Dorsolateral prefrontal cortex (tissue), 120 donors: ENCODE measurements at regions of chr6 and their contacts with region 1.

Region 1: DNA sequence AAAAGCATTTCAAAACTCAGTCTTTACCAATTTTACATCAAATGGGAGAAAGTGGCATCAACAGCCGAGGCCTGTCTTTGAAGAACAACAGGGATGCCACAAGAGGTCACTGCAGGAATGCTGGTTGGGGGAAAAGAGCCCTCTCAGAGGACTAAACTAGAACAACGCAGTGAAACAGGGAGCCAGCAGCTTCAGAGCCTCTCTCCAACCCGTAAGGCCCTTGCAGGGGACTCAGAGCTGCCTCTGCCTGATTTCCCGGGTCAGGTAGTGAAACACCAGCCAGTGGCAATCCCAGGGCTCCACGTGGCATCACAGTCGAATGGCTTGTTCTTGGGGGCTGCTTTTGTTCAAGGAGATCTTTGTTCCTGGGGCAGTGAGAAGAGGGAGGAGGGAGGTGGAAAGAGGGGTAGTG is 55.0 kb upstream of the KCNK16 start:
- DNase-seq: peak; percentile 48 to 89 (median 78)
- H3K4me3 ChIP-seq: peak overlapping the region in 1 of 59 donors; percentile 19
- H3K27ac ChIP-seq: peak overlapping the region in 47 of 59 donors; percentile 4 to 88 (median 65)
- H3K27me3 ChIP-seq: no peaks in the 10 kb centered on the region
- CTCF ChIP-seq: peak; percentile 9 to 93 (median 81)

Region 2: DNA sequence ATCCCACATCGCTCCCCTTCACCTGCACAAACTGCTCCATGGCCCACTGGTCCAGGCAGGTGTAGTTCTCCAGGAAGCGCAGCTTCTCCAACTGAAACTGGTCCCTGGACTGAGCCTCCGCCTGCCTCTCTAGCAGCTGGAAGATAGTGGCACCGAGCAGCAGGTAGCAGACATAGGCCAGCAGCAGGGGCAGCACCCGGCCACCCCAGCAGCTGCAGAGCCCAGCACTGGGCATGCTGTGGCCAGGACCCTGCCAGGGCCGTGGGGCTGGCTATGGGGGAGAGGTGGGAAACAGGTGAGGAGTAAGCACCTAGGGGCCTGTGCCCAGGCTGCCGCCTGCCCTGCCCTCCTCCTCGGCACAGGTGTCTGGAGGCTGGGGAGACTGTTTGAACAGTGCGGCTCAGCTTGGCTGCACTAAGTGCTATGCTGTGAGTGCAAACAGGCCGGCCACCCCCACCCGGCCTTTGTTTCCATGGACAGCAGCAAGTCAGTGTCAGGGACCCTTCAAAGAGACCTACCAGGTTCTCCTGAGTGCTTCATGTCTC is 55.2 kb before region 1 on chr6 and contains the start of gene KCNK16:
- intact Hi-C with region 1: no loop called
- DNase-seq: no peak
- H3K4me3 ChIP-seq: no peak within 1 kb of the TSS
- H3K27ac ChIP-seq: no peak within 1 kb of the TSS
- H3K27me3 ChIP-seq: no peaks in the 10 kb centered on the region
- CTCF ChIP-seq: no peak
- total RNA-seq, gene KCNK16: 0.42 to 0.76 (median 0.50) TPM in 7 of 120 experiments, not detected in the others

Region 3: GRCh38 chr6:39430871-39431523 is 53.5 kb after region 1 on chr6:
- intact Hi-C with region 1: loop called in 1 of 2 experiments (anchors 5 kb)
- DNase-seq: peak; percentile 71 to 84 (median 82)
- H3K4me3 ChIP-seq: peak overlapping the region in 31 of 59 donors; percentile 0 to 54 (median 17)
- H3K27ac ChIP-seq: peak overlapping the region in 57 of 59 donors; percentile 15 to 92 (median 72)
- H3K27me3 ChIP-seq: no peaks in the 10 kb centered on the region
- CTCF ChIP-seq: peak in 36 of 56 donors; percentile 10 to 59 (median 31)

Region 4: GRCh38 chr6:39669207-39669972 is 291.8 kb after region 1 on chr6:
- intact Hi-C with region 1: loop called (anchors 5 kb)
- DNase-seq: no peak
- H3K4me3 ChIP-seq: no peak overlapping the region
- H3K27ac ChIP-seq: peak overlapping the region in 10 of 59 donors; percentile 5 to 94 (median 86)
- H3K27me3 ChIP-seq: no peaks in the 10 kb centered on the region
- CTCF ChIP-seq: no peak

Region 5: DNA sequence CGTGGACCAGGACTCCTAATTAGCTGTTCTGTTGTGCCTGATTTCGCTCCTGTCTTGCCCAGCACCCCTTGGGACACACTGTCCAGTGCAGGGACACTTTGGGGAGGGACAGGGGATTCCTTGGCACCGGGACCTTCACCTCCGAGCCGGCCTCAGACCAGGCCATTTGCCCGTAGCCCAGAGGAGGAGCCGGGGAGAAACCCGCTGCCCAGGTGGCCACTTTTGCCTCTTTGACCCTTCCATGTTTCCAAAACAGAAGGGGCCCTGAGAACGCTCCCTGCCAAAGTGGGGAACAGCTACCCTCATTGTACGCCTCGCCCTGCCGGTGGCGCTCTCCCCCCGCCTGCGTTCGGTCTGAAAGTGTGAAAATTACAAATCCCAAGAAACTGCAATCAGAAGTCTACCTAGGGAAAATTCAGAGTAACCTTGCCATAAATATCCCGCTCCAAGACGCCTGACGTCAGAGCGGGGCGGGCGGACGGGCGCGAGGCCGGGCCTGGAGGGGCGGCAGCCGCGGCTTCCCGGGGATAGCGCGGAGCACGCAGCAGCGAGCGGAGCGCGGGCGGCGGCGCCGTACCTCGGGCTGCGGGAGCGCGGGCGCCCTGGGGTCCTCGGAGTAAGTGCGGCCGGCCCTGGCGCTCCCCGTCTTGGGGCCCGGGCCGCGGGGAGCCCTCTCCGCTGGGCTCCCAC is 414.4 kb after region 1 on chr6 and contains the start of gene DAAM2:
- intact Hi-C with region 1: loop called in 1 of 2 experiments (anchors 10 kb)
- DNase-seq: peak in 4 of 10 donors; percentile 45 to 78 (median 66)
- H3K4me3 ChIP-seq: peak within 1 kb of the TSS; percentile 48 to 84 (median 73)
- H3K27ac ChIP-seq: peak within 1 kb of the TSS; percentile 52 to 98 (median 94)
- H3K27me3 ChIP-seq: peaks cover 0 to 6% (median 0%) of the 10 kb centered on the region in 45 donors
- CTCF ChIP-seq: peak in 42 of 56 donors; percentile 2 to 53 (median 30)
- total RNA-seq, gene DAAM2: 43.8 to 450 (median 152) TPM